ENCODE measurements at regions of chr11 and their contacts with region 1.

Region 1: DNA sequence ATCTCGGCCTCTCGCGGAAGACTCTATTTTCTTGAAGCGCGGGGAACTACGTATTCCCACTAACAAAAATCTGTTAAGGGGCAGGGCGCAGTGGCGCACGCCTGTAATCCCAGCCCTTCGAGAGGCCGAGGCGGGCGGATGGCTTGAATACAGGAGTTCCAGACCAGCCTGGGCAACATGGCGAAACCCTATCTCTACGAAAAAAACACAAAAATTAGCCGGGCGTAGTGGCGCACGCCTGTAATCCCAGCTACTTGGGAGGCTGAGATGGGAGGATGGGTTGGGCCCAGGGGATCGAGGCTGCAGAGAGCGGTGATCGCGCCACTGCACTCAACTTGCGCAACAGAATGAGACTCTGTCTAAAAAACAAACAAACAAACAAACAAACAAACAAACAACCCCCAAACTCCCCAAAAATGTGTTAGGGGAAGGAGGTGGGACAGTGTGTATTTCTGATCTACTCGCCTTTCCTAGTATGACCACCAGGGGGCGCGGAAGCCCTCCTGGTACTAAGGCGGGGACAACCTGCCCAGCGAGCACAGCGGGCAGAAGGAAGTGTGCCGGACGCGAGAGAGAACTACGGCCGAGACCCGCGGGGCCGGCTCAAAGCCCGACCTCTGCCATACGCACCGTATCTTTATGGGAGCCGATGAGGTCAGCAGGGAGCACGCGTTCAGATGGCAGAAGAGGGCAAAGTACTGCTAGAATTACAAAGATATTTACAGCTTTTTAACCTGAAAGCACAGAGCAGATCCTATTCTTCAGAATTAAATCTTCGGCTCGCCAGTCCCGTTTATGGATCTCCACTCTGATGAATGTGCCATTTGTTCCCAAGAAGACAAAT is 1.3 kb upstream of the STX3 start:
- DNase-seq: peak; percentile 72 to 83
- ATAC-seq: peak; percentile 54 to 66
- H3K4me3 ChIP-seq: peak overlapping the region; percentile 83 to 95 (median 90)
- H3K27ac ChIP-seq: peak overlapping the region; percentile 88 to 95 (median 92)
- H3K4me1 ChIP-seq: peaks cover 15 to 20% of the 10 kb centered on the region in 2 donors
- H3K27me3 ChIP-seq: no peaks in the 10 kb centered on the region
- CTCF ChIP-seq: peak; percentile 88 to 95 (median 93)
- POLR2A ChIP-seq: no peak

Region 2: GRCh38 chr11:59448484-59448883 is 305.4 kb before region 1 on chr11:
- in situ Hi-C with region 1: no loop called
- intact Hi-C with region 1: no loop called
- DNase-seq: no peak
- ATAC-seq: no peak
- H3K4me3 ChIP-seq: no peak overlapping the region
- H3K27ac ChIP-seq: no peak overlapping the region
- H3K4me1 ChIP-seq: no peaks in the 10 kb centered on the region
- H3K27me3 ChIP-seq: no peaks in the 10 kb centered on the region
- CTCF ChIP-seq: no peak
- POLR2A ChIP-seq: no peak

Region 3: GRCh38 chr11:59550368-59550841 is 203.5 kb before region 1 on chr11:
- in situ Hi-C with region 1: no loop called
- intact Hi-C with region 1: loop called (anchors 5 kb)
- DNase-seq: peak; percentile 50 to 67
- ATAC-seq: peak; percentile 71 to 73
- H3K4me3 ChIP-seq: peak overlapping the region; percentile 62 to 75 (median 67)
- H3K27ac ChIP-seq: peak overlapping the region; percentile 73 to 84 (median 78)
- H3K4me1 ChIP-seq: peaks cover 4 to 10% of the 10 kb centered on the region in 2 donors
- H3K27me3 ChIP-seq: no peaks in the 10 kb centered on the region
- CTCF ChIP-seq: peak; percentile 30 to 63 (median 55)
- POLR2A ChIP-seq: no peak

Region 4: GRCh38 chr11:59615637-59616395 is 138.1 kb before region 1 on chr11 and contains the start of gene OSBP:
- in situ Hi-C with region 1: no loop called
- intact Hi-C with region 1: loop called (anchors 1 kb)
- DNase-seq: peak; percentile 100
- ATAC-seq: peak; percentile 85 to 86
- H3K4me3 ChIP-seq: peak within 1 kb of the TSS; percentile 72 to 88 (median 82)
- H3K27ac ChIP-seq: peak within 1 kb of the TSS; percentile 90 to 97 (median 94)
- H3K4me1 ChIP-seq: peaks cover 42 to 44% of the 10 kb centered on the region in 2 donors
- H3K27me3 ChIP-seq: no peaks in the 10 kb centered on the region
- CTCF ChIP-seq: peak in 2 of 5 experiments; percentile 7 to 38
- POLR2A ChIP-seq: peak; percentile 91 to 93
- total RNA-seq, gene OSBP: 27.4 to 45.2 (median 34.9) TPM

Region 5: GRCh38 chr11:59668950-59669610 is 84.8 kb before region 1 on chr11 and contains the start of gene PATL1:
- in situ Hi-C with region 1: no loop called
- intact Hi-C with region 1: loop called (anchors 1 kb)
- DNase-seq: peak; percentile 100
- ATAC-seq: peak; percentile 93 to 97
- H3K4me3 ChIP-seq: peak within 1 kb of the TSS; percentile 90 to 97 (median 96)
- H3K27ac ChIP-seq: peak within 1 kb of the TSS; percentile 95 to 99 (median 97)
- H3K4me1 ChIP-seq: peaks cover 19 to 26% of the 10 kb centered on the region in 2 donors
- H3K27me3 ChIP-seq: no peaks in the 10 kb centered on the region
- CTCF ChIP-seq: peak in 1 of 5 experiments; percentile 38
- POLR2A ChIP-seq: peak; percentile 90 to 94
- total RNA-seq, gene PATL1: 19.0 to 29.9 (median 26.2) TPM

Region 6: DNA sequence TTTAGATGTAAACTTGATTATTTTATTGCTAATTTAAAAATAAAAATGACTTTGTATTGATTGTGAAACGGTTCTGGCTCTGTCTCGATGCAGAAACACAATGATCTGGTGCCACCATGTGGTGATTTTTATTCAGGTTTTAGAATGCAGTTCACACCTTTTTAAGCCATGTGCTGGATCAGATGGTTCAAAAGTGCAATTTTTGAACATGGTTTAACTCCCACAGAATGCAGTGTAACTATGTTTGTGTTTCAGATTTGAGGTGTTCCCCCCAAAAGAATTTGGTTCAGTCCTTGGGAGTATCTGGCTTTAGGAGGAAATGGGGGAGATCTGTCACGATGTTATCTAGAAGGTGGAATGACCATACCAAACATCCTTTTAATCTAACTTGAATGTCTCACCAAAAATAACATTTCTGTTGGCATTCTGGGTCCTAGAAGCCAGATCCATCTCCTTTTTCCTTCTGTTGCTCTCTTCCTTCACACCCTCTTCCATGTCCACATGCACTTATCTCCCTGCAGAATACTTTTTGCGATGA is 48.8 kb after region 1 on chr11:
- in situ Hi-C with region 1: loop called (anchors 5 kb)
- intact Hi-C with region 1: loop called (anchors 1 kb)
- DNase-seq: peak in 1 of 2 donors; percentile 18
- ATAC-seq: peak; percentile 84 to 85
- H3K4me3 ChIP-seq: no peak overlapping the region
- H3K27ac ChIP-seq: peak overlapping the region; percentile 36 to 78 (median 64)
- H3K4me1 ChIP-seq: peaks cover 6 to 9% of the 10 kb centered on the region in 2 donors
- H3K27me3 ChIP-seq: no peaks in the 10 kb centered on the region
- CTCF ChIP-seq: peak; percentile 59 to 83 (median 64)
- POLR2A ChIP-seq: no peak

Region 7: GRCh38 chr11:59810189-59810910 is 56.5 kb after region 1 on chr11 and contains the start of gene MRPL16:
- in situ Hi-C with region 1: no loop called
- intact Hi-C with region 1: loop called (anchors 2 kb)
- DNase-seq: peak; percentile 73 to 82
- ATAC-seq: peak; percentile 98 to 99
- H3K4me3 ChIP-seq: peak within 1 kb of the TSS; percentile 76 to 98 (median 93)
- H3K27ac ChIP-seq: peak within 1 kb of the TSS; percentile 83 to 90 (median 87)
- H3K4me1 ChIP-seq: peaks cover 8 to 11% of the 10 kb centered on the region in 2 donors
- H3K27me3 ChIP-seq: no peaks in the 10 kb centered on the region
- CTCF ChIP-seq: peak; percentile 14 to 51 (median 17)
- POLR2A ChIP-seq: peak in 1 of 2 donors; percentile 16
- total RNA-seq, gene MRPL16: 33.7 to 78.2 (median 38.3) TPM

Region 8: DNA sequence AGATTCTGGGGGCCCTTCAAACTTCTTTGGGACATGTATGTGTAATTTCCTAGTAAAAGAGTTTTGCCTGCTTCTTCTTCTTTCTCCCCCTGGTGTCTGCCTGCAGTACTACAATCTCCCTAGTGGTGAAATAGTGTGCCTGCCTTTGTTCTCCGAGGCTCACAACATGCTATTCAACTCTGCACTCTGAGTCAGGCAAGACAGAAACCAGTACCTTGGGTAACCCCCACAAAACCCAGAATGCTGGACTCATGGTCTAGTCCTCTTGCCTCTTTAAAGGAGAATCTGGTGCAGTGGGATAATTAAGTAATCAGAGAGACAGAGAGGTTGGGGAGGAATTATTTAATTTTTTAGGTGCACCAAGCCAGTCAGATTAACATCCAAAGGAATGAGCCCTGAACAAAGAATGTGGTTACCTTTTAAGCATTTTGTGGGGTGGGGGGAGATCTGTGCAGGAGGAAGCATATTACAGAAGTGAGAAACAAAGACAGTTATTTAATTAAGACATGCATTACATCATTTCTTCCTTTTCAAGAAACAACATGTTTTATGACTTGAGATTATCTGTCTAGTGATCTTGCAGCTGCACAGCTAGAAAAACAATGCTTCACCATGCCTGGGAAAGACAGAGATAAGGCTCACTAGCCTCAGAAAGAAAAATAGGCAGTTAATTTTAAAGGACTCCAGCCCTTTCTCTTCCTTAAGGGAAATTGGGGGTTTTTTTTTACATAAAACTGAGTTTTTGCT is 440.0 kb after region 1 on chr11:
- in situ Hi-C with region 1: no loop called
- intact Hi-C with region 1: loop called (anchors 5 kb)
- DNase-seq: no peak
- ATAC-seq: peak in 1 of 2 donors; percentile 33
- H3K4me3 ChIP-seq: no peak overlapping the region
- H3K27ac ChIP-seq: no peak overlapping the region
- H3K4me1 ChIP-seq: no peaks in the 10 kb centered on the region
- H3K27me3 ChIP-seq: no peaks in the 10 kb centered on the region
- CTCF ChIP-seq: peak; percentile 39 to 71 (median 63)
- POLR2A ChIP-seq: no peak

Measured in gastrocnemius medialis (tissue), 4 donors.